A549 (cell line): ENCODE measurements at regions of chr4 and their contacts with region 1.

Region 1: DNA sequence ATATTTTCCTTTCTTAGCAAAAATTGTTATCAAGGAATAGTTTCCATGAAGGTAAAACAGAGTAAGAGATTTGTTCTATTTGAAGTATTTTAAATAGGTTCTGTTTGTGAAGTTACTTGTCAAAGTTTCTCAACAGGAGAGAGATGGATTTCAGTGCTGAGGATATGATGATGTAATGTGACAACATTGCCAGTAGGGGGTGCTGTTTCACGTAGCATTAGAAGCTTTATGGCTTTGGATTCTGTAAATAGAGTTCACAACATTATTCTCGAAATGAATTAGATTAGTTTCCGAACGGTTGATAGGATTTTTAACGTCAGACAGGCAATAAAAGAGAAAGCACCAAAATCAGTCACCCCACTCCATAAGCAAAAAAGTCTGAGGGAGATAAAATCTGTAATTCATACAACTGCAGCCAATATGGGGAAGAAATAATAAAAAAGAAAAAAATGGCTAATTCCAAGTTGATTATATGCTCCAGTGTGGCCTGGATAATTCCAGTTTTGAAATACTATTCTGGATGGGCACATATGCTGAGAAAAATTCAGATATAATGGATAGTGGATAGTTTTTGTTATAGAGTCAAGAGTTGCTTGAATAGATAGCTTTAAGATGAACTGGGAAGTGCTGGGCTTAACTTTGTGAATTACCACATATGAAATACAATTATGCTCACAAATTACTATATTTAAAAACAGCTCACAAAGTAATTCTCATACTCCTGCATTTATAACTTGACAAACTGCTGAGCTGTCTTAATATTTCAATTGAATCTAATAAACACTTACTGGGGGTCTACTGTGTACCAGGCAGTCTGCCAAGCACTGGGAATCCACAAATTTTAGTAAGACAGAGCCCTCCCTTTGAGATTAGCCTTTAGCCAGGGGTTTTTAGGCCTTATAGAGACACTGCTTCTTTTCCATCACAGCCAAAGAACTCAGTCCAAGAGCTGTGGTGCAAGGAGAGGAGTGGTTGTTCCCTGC is 109.1 kb downstream of the GPAT3 start:
- DNase-seq: peak; percentile 25 to 68
- ATAC-seq: peak in 1 of 2 experiments; percentile 77; a peak in 3 of 6 replicates
- H3K4me3 ChIP-seq: no peak overlapping the region
- H3K27ac ChIP-seq: no peak overlapping the region
- H3K4me1 ChIP-seq: no peaks in the 10 kb centered on the region
- CTCF ChIP-seq: peak; percentile 79
- EP300 ChIP-seq: no peak
- POLR2A ChIP-seq: no peak
- RAD21 ChIP-seq: peak; percentile 78 to 81

Region 2: DNA sequence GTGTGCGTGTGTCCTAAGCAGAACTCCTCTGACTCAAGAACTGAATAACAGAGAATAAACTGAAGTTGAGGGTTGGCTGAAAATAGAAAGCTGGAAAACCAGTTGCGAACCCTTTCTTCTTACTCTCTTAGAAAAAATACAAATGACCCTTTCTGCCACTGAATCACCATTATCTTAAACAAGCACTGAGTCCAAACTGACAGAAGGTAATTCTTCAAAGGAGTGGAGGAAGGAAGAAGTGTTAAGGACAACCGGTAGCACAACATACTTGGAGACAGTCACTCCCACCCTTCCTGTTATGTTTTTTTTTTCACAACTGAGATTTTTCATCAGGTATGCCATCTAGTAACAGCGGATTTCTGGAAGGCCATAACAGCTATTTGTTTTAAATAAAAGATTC is 227.4 kb before region 1 on chr4:
- CTCF ChIA-PET with region 1: no interaction called
- POLR2A ChIA-PET with region 1: no interaction called
- DNase-seq: no peak
- ATAC-seq: no peak
- H3K4me3 ChIP-seq: no peak overlapping the region
- H3K27ac ChIP-seq: no peak overlapping the region
- H3K4me1 ChIP-seq: no peaks in the 10 kb centered on the region
- CTCF ChIP-seq: no peak
- EP300 ChIP-seq: no peak
- POLR2A ChIP-seq: no peak
- RAD21 ChIP-seq: no peak

Region 3: GRCh38 chr4:83503974-83504373 is 141.0 kb before region 1 on chr4:
- CTCF ChIA-PET with region 1: interaction called, 11 read pairs
- POLR2A ChIA-PET with region 1: no interaction called
- DNase-seq: no peak
- ATAC-seq: no peak
- H3K4me3 ChIP-seq: no peak overlapping the region
- H3K27ac ChIP-seq: no peak overlapping the region
- H3K4me1 ChIP-seq: no peaks in the 10 kb centered on the region
- CTCF ChIP-seq: no peak
- EP300 ChIP-seq: no peak
- POLR2A ChIP-seq: no peak
- RAD21 ChIP-seq: no peak

Region 4: DNA sequence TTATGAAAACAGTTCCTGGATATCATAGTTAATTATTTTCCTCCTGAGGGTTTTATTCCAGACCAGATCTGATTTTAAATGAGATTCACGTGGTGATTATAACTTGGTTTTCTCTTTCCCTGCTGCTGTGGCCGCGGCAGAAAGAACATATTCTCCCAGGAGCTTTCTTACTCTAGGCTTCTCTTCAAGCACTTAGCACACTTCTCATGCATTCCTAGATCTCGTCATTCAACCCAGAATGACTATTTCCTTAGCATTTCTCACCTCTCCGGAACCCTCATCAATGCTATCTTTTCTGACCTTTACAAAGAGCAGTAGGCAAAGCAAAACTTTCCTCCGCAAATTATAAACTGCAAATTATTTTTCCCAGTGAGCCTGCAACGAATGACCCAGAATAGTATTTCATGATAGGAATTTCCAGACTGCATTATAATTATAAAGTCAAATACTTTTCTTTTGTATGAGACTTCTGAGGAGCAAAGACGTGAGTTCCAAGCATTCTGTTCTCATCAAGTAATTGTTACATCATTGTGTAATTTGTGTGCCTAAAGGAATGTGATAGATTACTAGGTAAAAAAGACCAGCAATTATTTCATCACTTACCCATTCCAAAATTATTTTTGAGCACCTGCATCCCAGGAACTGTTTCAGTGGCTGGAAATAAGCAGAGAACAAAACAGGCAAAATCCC is 14.0 kb after region 1 on chr4:
- CTCF ChIA-PET with region 1: interaction called, 16 read pairs
- POLR2A ChIA-PET with region 1: no interaction called
- DNase-seq: no peak
- ATAC-seq: no peak
- H3K4me3 ChIP-seq: no peak overlapping the region
- H3K27ac ChIP-seq: no peak overlapping the region
- H3K4me1 ChIP-seq: no peaks in the 10 kb centered on the region
- CTCF ChIP-seq: no peak
- EP300 ChIP-seq: no peak
- POLR2A ChIP-seq: no peak
- RAD21 ChIP-seq: no peak

Region 5: GRCh38 chr4:84451546-84451945 is 806.6 kb after region 1 on chr4:
- CTCF ChIA-PET with region 1: interaction called, 12 read pairs
- POLR2A ChIA-PET with region 1: no interaction called
- DNase-seq: peak in 1 of 2 experiments; percentile 6
- ATAC-seq: no peak
- H3K4me3 ChIP-seq: no peak overlapping the region
- H3K27ac ChIP-seq: no peak overlapping the region
- H3K4me1 ChIP-seq: no peaks in the 10 kb centered on the region
- CTCF ChIP-seq: peak; percentile 46
- EP300 ChIP-seq: no peak
- POLR2A ChIP-seq: no peak
- RAD21 ChIP-seq: peak; percentile 30 to 34; a peak in 3 of 5 replicates

Region 6: GRCh38 chr4:84503495-84504437 is 858.8 kb after region 1 on chr4:
- CTCF ChIA-PET with region 1: interaction called, 10 read pairs
- POLR2A ChIA-PET with region 1: no interaction called
- DNase-seq: peak; percentile 56 to 66
- ATAC-seq: peak; percentile 62 to 81
- H3K4me3 ChIP-seq: no peak overlapping the region
- H3K27ac ChIP-seq: no peak overlapping the region
- H3K4me1 ChIP-seq: no peaks in the 10 kb centered on the region
- CTCF ChIP-seq: peak; percentile 67
- EP300 ChIP-seq: no peak
- POLR2A ChIP-seq: no peak
- RAD21 ChIP-seq: peak; percentile 78 to 79